Activated T-helper 1 cell treated with anti-CD3 and anti-CD28 coated beads, Interleukin-12 subunit alpha, Interleukin-12 subunit beta, Interleukin-2, Interleukin-4 antibody, amounts not matched to agents 30 ng/mL and 10 ng/mL and 1 ng/mL, durations not matched to agents 14 hours and 24 hours and 36 hours (primary cell): ENCODE measurements at regions of chr3 and their contacts with region 1.

Region 1: GRCh38 chr3:156615592-156616173 is 58.7 kb upstream of the TIPARP start:
- DNase-seq: no peak
- H3K4me3 Mint-ChIP-seq: no peak overlapping the region
- H3K27ac Mint-ChIP-seq: peak overlapping the region; percentile 59
- H3K4me1 Mint-ChIP-seq: peaks cover 25% of the 10 kb centered on the region
- H3K27me3 Mint-ChIP-seq: no peaks in the 10 kb centered on the region

Region 2: DNA sequence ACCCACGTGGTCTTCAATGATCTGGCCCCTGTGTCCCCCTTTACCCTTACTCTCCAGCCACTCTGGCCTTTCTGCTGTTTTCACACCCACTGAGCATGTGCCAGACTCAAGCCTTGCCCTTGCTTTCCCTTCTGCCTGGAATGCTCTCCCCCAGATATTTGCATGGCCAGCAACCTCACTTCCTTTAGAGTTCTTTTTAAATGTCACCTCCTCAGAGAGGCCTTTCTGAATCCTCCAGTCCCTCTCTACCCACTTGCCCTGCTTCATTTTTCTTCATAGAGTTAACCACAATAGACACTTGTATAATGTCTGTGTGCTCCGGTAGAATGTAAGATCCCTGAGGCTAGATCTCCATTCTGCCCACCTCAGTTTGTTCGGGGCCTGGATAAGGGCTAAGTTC is 19.4 kb after region 1 on chr3:
- intact Hi-C with region 1: loop called (anchors 2 kb)
- DNase-seq: no peak
- H3K4me3 Mint-ChIP-seq: no peak overlapping the region
- H3K27ac Mint-ChIP-seq: no peak overlapping the region
- H3K4me1 Mint-ChIP-seq: no peaks in the 10 kb centered on the region
- H3K27me3 Mint-ChIP-seq: no peaks in the 10 kb centered on the region

Region 3: DNA sequence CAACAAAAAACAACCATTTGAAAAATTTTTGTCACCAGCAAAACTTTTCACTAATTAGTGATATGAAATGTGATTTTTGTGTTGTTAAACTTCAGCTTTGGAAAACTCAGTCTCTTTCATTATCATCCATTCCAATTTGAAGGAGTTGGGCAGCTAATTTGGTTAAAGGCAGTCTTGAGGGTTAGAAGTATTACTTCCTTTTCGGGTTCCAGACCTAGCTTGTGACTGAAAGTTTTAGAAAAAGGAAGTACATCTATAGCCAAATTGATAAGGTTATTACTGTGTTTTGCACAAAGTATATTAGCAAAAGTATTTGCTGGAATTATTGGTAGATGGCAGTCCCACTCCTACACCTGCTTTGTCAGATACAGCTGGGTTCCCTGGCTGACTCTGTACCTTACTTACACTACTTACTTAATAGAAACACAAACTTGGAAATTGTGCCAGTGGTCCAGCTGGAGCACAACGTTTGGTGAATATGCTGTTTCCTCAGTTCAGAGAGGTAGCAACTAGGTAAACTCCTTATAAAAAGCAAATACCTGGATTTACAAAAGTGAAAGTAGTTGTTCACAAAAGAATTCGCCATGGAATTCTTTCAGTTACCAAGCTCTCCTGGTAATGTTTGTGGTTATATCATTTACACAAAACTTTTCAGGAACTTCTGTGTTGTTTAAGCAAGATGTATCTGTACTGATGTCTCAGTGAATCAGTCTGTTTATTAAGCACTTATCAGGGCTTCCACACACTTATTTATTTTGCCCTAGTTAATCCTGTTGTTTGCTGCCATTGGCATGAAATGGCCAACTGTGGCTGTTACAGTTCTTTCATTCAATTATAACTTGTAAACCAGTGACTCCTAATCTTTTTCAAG is 90.3 kb after region 1 on chr3:
- intact Hi-C with region 1: no loop called
- DNase-seq: no peak
- H3K4me3 Mint-ChIP-seq: no peak overlapping the region
- H3K27ac Mint-ChIP-seq: no peak overlapping the region
- H3K4me1 Mint-ChIP-seq: peaks cover 48% of the 10 kb centered on the region
- H3K27me3 Mint-ChIP-seq: no peaks in the 10 kb centered on the region